AG04450 (cell line): ENCODE measurements at regions of chrX and their contacts with region 1.

Region 1: DNA sequence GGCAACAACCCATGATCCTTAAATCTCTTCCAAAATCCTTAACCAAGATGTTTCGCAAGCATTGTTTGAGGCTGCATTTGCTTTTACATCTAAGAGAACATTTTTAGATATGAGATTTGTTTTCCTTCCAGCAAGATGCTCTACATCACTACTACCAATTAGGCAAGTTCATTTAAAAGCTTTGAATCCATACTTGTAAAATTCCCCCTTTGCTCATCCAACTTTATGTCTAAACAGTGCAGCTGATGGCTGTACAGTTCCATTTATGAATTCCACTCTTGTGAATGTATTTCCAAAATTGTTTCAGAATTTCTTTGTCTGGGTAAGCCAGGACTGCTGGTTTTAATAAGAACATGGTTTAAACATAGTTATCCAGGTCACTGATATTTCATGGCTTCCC is 31.5 kb downstream of the RAI2 start:
- DNase-seq: no peak
- H3K4me3 ChIP-seq: no peak overlapping the region
- H3K27ac ChIP-seq: no peak overlapping the region
- H3K27me3 ChIP-seq: no peaks in the 10 kb centered on the region
- CTCF ChIP-seq: no peak

Region 2: DNA sequence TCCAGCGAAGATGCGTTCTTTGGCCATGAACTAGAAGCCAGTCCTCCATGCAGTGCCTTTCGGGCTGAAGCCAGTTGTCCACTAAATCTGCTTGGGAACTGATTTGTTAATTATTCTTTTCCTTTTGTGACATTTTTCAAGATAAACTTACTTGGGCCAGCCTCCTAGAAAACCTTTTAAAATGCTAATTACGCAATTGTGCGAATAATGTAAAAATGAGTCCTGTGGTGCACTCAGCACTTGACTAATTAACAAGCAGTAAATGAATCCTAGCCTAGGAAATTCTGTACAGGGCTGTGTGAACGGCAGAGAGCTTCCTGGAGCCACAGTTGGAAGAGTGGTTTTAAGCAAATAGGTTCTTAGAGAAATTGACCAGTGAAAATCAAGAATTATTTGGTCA is 242.2 kb before region 1 on chrX:
- CTCF ChIA-PET with region 1: no interaction called
- POLR2A ChIA-PET with region 1: no interaction called
- DNase-seq: no peak
- H3K4me3 ChIP-seq: no peak overlapping the region
- H3K27ac ChIP-seq: no peak overlapping the region
- H3K27me3 ChIP-seq: no peaks in the 10 kb centered on the region
- CTCF ChIP-seq: no peak

Region 3: DNA sequence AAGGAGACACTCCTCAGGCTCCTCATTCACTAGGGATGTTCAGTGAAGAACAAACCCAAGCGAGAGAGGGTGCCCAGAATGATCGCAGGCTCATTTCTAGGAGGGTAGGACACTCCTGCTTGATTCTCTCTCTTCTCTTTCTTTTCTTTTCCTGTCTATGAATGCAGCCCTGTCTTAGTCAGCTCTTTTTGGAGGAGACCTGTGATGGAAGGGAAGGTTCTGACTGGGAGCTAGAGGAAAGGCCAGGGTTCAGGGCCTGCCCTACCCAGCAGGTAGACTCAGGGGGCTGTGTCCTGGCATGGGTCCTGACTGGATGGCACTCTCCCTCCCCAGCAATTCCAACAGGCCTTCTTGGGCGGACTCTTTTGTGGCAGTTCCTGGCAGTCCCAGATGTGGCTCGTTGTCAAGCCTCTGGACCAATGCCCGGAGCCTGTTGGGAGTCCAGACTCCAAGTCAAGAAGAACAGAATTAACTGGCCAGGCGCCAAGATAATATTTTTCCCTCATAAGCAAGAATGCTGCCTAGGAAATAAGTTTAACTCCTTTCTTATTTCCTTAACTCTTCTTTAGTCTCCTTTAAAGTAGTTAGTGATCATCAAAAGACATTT is 231.6 kb before region 1 on chrX:
- CTCF ChIA-PET with region 1: no interaction called
- POLR2A ChIA-PET with region 1: no interaction called
- DNase-seq: no peak
- H3K4me3 ChIP-seq: no peak overlapping the region
- H3K27ac ChIP-seq: no peak overlapping the region
- H3K27me3 ChIP-seq: no peaks in the 10 kb centered on the region
- CTCF ChIP-seq: no peak

Region 4: DNA sequence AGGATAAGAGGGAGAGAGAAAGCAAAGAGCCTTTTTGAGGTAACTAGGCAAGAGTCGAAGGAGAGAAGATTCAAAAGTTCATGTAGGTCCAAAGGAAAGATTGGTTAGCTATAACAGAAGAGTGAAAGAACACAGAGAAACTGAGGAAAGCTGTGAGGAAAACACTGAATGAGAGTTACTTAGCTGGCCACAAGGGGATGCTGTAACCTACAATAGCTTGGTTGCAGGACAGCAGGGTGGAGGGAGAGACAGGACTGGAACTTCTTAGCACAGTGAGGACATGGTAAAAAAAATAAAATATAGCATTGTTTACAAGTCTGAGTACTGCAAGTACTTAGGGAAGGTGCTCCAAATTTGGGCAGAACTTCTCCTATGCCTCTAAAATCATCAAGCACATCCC is 16.8 kb before region 1 on chrX:
- CTCF ChIA-PET with region 1: interaction called, 12 read pairs
- POLR2A ChIA-PET with region 1: no interaction called
- DNase-seq: no peak
- H3K4me3 ChIP-seq: no peak overlapping the region
- H3K27ac ChIP-seq: no peak overlapping the region
- H3K27me3 ChIP-seq: no peaks in the 10 kb centered on the region
- CTCF ChIP-seq: peak; percentile 35